CD8-positive, alpha-beta T cell (primary cell): ENCODE measurements at regions of chr22 and their contacts with region 1.

Region 1: DNA sequence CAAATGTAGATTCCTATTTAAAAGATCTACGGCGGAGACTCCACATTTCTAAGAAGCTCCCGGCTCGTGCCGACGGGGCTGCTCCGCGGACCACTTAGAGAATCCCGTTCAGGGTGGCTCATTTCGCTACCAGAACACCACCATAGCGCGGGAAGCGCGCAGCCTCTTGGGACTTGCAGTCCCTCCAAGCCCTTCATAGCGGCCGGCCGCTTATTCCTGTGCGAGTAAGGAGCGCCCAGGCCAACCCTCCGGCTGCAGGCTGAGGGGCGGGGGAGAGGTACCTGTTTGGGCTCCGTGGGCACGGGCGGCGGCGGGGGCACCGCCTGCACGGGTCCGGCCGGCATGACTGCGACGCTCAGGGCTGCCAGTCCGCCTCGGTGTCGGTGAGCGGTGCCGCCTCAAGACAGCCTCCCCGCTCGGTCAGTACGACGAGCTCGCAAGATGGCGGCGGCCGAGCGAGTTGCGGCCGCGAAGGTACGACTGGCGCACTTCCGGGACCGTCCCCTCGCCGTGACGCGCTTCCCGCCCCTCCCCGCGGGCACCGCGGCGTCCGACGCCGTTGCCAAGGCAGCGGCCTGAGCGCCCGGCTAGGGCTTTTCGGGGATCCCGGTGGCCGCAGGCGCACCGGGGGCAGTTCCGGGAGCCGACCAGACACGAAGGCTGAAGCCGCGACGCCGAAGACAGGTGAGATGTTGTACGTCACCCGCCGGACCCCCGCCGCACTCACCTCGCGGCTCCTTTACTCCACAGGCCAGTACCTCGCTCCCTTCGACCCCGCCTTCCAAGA is at the starts of genes CCDC157 and SF3A1:
- DNase-seq: peak; percentile 74 to 96 (median 87)
- ATAC-seq: peak; percentile 83
- H3K4me3 ChIP-seq: peak within 1 kb of the TSS; percentile 73 to 94
- H3K4me3 Mint-ChIP-seq: peak within 1 kb of the TSS; percentile 92
- H3K27ac ChIP-seq: peak within 1 kb of the TSS; percentile 93 to 99
- H3K27ac Mint-ChIP-seq: peak within 1 kb of the TSS; percentile 93
- H3K4me1 ChIP-seq: peaks cover 44% of the 10 kb centered on the region
- H3K4me1 Mint-ChIP-seq: peaks cover 48% of the 10 kb centered on the region
- H3K27me3 ChIP-seq: no peaks in the 10 kb centered on the region
- H3K27me3 Mint-ChIP-seq: no peaks in the 10 kb centered on the region
- CTCF ChIP-seq: no peak
- total RNA-seq, gene CCDC157: 8.7 to 11.7 TPM
- total RNA-seq, gene SF3A1: 406 to 422 TPM

Region 2: GRCh38 chr22:30253205-30253852 is 103.3 kb before region 1 on chr22:
- CTCF ChIA-PET with region 1: no interaction called
- POLR2A ChIA-PET with region 1: no interaction called
- intact Hi-C with region 1: no loop called
- DNase-seq: no peak
- ATAC-seq: no peak
- H3K4me3 ChIP-seq: no peak overlapping the region
- H3K4me3 Mint-ChIP-seq: no peak overlapping the region
- H3K27ac ChIP-seq: no peak overlapping the region
- H3K27ac Mint-ChIP-seq: no peak overlapping the region
- H3K4me1 ChIP-seq: peaks cover 12% of the 10 kb centered on the region
- H3K4me1 Mint-ChIP-seq: peaks cover 5% of the 10 kb centered on the region
- H3K27me3 ChIP-seq: no peaks in the 10 kb centered on the region
- H3K27me3 Mint-ChIP-seq: peaks cover 5% of the 10 kb centered on the region
- CTCF ChIP-seq: no peak

Region 3: DNA sequence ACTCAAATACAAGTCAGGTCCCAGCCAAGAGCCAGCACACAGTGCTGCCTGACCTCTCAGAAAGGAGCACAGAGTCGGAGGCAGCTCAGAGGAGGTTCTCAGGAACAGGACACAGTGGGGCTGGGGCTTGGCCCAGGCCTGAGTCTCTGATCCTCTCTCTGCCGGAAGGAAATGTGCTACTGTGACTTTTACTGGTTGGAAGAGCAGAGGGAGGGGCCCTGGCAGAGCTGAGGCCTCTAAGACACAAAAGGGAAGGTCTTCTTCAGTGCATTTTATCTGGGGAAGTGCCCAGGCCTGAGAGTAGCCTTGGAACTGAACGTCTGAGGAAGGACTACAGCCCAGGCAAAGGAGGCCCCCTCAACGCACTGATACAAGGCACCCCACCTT is 51.1 kb before region 1 on chr22:
- CTCF ChIA-PET with region 1: no interaction called
- POLR2A ChIA-PET with region 1: interaction called, 22 read pairs
- intact Hi-C with region 1: loop called (anchors 1 to 2 kb)
- DNase-seq: peak in 8 of 9 experiments; percentile 43 to 80 (median 56)
- ATAC-seq: peak; percentile 50
- H3K4me3 ChIP-seq: peak overlapping the region; percentile 36 to 38
- H3K4me3 Mint-ChIP-seq: peak overlapping the region; percentile 69
- H3K27ac ChIP-seq: peak overlapping the region; percentile 62 to 77
- H3K27ac Mint-ChIP-seq: peak overlapping the region; percentile 98
- H3K4me1 ChIP-seq: peaks cover 100% of the 10 kb centered on the region
- H3K4me1 Mint-ChIP-seq: peaks cover 97% of the 10 kb centered on the region
- H3K27me3 ChIP-seq: no peaks in the 10 kb centered on the region
- H3K27me3 Mint-ChIP-seq: no peaks in the 10 kb centered on the region
- CTCF ChIP-seq: no peak

Region 4: GRCh38 chr22:30326706-30327362 is 29.8 kb before region 1 on chr22 and contains the start of gene TBC1D10A:
- CTCF ChIA-PET with region 1: interaction called, 4 read pairs
- POLR2A ChIA-PET with region 1: interaction called, 18 read pairs
- intact Hi-C with region 1: loop called (anchors 1 kb)
- DNase-seq: peak; percentile 86 to 97 (median 94)
- ATAC-seq: peak; percentile 92
- H3K4me3 ChIP-seq: peak within 1 kb of the TSS; percentile 52 to 72
- H3K4me3 Mint-ChIP-seq: peak within 1 kb of the TSS; percentile 93
- H3K27ac ChIP-seq: peak within 1 kb of the TSS; percentile 68 to 86
- H3K27ac Mint-ChIP-seq: peak within 1 kb of the TSS; percentile 91
- H3K4me1 ChIP-seq: peaks cover 47% of the 10 kb centered on the region
- H3K4me1 Mint-ChIP-seq: peaks cover 45% of the 10 kb centered on the region
- H3K27me3 ChIP-seq: no peaks in the 10 kb centered on the region
- H3K27me3 Mint-ChIP-seq: no peaks in the 10 kb centered on the region
- CTCF ChIP-seq: no peak
- total RNA-seq, gene TBC1D10A: 77.5 to 87.3 TPM

Region 5: DNA sequence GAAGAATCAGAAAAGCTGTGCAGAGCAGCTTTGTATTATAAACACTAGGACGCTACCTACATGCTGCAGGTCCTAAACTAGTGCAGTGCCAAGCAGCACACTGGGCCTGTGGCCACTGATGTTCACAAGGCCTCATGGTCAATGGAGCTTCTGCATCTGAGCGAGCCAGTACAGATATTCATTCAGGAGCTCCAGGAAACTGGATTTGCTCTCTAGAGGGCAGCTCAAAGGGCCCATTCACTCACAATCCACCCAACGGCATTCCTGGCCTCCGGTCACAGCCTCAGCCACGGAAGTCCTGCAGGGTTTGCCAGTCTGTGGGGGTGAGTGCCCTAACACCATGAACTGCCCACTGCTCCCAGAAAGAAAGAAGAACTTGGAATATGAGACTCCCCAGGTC is 24.1 kb before region 1 on chr22:
- CTCF ChIA-PET with region 1: interaction called, 4 read pairs
- POLR2A ChIA-PET with region 1: interaction called, 5 read pairs
- intact Hi-C with region 1: loop called (anchors 1 kb)
- DNase-seq: no peak
- ATAC-seq: no peak
- H3K4me3 ChIP-seq: no peak overlapping the region
- H3K4me3 Mint-ChIP-seq: no peak overlapping the region
- H3K27ac ChIP-seq: no peak overlapping the region
- H3K27ac Mint-ChIP-seq: no peak overlapping the region
- H3K4me1 ChIP-seq: peaks cover 3% of the 10 kb centered on the region
- H3K4me1 Mint-ChIP-seq: peaks cover 5% of the 10 kb centered on the region
- H3K27me3 ChIP-seq: no peaks in the 10 kb centered on the region
- H3K27me3 Mint-ChIP-seq: no peaks in the 10 kb centered on the region
- CTCF ChIP-seq: no peak

Region 6: DNA sequence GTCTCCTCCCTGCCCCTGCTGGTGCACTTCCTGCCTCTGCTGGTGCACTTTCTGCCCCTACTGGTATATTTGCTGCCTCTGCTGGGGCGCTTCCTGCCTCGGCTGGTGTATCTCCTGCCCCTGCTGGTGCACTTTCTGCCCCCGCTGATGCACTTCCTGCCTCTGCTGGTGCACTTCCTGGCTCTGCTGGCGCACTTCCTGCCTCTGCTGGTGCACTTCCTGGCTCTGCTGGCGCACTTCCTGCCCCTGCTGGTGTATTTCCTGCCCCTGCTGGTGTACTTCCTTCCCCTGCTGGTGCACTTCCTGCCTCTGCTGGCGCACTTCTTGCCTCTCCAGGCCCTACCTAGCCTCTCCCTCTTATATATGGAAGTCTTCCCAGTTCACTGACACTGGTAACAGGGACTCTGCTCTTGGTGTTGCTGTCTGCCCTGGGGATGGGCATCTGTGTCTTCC is 79.1 kb after region 1 on chr22:
- CTCF ChIA-PET with region 1: no interaction called
- POLR2A ChIA-PET with region 1: interaction called, 3 read pairs
- intact Hi-C with region 1: loop called (anchors 1 to 2 kb)
- DNase-seq: peak; percentile 68 to 99 (median 89)
- ATAC-seq: peak; percentile 92
- H3K4me3 ChIP-seq: peak overlapping the region; percentile 39 to 51
- H3K4me3 Mint-ChIP-seq: peak overlapping the region; percentile 65
- H3K27ac ChIP-seq: peak overlapping the region; percentile 80 to 100
- H3K27ac Mint-ChIP-seq: peak overlapping the region; percentile 97
- H3K4me1 ChIP-seq: peaks cover 17% of the 10 kb centered on the region
- H3K4me1 Mint-ChIP-seq: peaks cover 26% of the 10 kb centered on the region
- H3K27me3 ChIP-seq: peaks cover 0 to 6% of the 10 kb centered on the region in 2 experiments
- H3K27me3 Mint-ChIP-seq: peaks cover 22% of the 10 kb centered on the region
- CTCF ChIP-seq: peak; percentile 70

Region 7: DNA sequence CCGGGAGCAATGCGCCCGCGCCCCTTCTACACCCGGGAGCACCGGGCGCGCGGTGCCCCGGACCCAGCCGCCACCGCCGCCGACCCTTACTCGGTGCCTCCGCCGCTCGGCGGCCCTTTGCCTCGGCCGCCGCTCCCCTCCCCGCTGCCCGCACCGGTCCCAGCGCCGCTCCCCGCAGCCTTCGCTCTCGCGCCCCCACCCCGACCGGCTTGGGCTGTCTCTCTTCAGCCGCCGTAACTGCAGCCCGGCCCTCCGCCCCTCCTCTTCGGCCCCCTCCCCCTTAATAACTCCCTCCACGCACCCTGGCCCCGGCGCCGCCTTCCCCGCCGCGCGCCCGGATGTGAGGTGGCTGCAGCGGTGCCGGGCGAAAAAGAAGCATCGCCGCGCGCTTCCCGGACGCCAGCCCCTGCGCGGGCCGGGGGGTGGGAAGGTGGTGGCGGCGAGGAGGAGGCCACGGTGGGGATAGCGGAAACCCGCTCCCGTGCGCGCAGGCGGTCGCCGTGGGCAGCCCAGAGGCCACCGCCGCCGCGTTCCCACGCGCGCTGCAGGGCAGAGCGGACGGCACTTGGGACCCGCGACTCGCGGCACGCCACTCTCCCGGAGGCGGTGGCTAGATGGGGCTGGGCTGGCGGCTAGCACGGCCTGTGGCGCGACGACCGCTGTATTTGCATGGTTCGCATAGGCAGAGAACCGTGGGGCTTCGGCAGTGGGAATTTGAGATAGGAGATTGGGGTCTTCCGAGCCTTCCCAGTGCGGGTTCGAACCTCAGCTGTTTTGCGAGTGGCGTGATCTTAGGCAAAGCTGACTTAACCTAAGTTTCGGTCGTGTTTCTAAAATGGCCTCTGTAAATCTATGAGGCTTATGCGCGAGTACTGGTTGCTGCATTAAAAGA is 1133.2 kb after region 1 on chr22 and contains the start of gene EIF4ENIF1:
- CTCF ChIA-PET with region 1: no interaction called
- POLR2A ChIA-PET with region 1: no interaction called
- intact Hi-C with region 1: no loop called
- DNase-seq: peak; percentile 71 to 93 (median 85)
- ATAC-seq: peak; percentile 80
- H3K4me3 ChIP-seq: peak within 1 kb of the TSS; percentile 78 to 79
- H3K4me3 Mint-ChIP-seq: peak within 1 kb of the TSS; percentile 93
- H3K27ac ChIP-seq: peak within 1 kb of the TSS; percentile 92
- H3K27ac Mint-ChIP-seq: peak within 1 kb of the TSS; percentile 98
- H3K4me1 ChIP-seq: peaks cover 18% of the 10 kb centered on the region
- H3K4me1 Mint-ChIP-seq: peaks cover 47% of the 10 kb centered on the region
- H3K27me3 ChIP-seq: no peaks in the 10 kb centered on the region
- H3K27me3 Mint-ChIP-seq: no peaks in the 10 kb centered on the region
- CTCF ChIP-seq: no peak
- total RNA-seq, gene EIF4ENIF1: 12.1 to 14.5 TPM